ENCODE measurements at regions of chr10 and their contacts with region 1.

Region 1: GRCh38 chr10:73848821-73849489 is 25.4 kb downstream of the CAMK2G start:
- DNase-seq: peak; percentile 86
- ATAC-seq: peak; percentile 83 to 85

Region 2: GRCh38 chr10:73772280-73773151 is 76.4 kb before region 1 on chr10:
- intact Hi-C with region 1: no loop called
- DNase-seq: peak; percentile 86
- ATAC-seq: peak; percentile 88 to 90

Region 3: DNA sequence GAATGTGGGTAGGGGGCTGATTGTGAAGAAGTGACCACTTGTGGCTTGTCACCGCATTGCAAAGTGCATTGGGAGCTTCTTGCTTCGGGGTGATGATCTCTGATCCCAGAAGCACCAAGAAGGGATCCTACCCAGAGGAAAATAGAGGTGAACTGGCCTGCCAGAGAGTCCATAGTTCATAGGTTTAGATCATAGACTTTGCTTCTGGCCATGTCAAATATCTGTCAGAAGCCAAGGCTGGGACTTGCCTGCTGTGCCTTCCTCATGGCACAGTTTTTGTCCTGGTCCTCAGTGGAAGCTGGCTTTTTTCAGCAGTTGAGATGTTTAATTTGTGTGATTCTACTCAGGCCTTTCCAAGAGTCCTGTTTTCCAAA is 62.5 kb before region 1 on chr10:
- intact Hi-C with region 1: no loop called
- DNase-seq: no peak
- ATAC-seq: no peak

Region 4: GRCh38 chr10:73879296-73880173 is 30.6 kb after region 1 on chr10:
- intact Hi-C with region 1: loop called (anchors 1 to 2 kb)
- DNase-seq: peak; percentile 91
- ATAC-seq: peak; percentile 93 to 96

Region 5: DNA sequence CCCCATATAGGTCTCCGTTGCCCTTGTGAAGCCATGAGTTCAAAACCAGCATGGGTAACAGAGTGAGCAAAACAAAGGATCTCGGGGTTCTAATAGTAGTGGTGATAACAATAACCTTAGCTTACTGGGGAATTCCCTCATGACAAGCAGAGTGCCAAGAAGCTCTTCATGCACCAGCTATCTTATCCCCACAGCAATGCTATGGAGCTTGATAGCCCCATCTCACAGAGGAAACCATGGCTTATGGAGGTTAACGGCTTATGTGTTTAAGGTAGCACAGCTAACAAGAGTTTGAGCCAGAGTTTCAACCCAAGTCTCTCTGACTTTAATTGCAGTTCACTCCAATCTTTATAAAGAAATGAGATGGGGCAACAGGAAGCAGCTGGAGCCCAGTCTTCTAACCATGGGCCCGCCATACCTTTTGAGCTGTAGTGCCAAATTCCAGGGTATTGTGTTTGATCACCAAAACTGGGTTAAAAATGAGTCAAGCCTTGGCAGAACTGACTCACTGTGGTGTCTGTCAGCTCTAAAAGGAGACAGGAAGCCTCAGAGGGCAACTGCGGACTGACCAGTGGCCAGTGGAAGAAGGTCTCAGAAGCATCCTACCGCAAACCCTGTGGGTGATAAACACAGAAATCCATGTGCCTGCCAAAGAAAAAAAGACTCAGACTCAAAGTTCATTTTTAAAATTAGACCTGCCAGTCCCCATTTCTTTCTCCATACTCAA is 45.5 kb after region 1 on chr10:
- intact Hi-C with region 1: no loop called
- DNase-seq: no peak
- ATAC-seq: no peak

Region 6: DNA sequence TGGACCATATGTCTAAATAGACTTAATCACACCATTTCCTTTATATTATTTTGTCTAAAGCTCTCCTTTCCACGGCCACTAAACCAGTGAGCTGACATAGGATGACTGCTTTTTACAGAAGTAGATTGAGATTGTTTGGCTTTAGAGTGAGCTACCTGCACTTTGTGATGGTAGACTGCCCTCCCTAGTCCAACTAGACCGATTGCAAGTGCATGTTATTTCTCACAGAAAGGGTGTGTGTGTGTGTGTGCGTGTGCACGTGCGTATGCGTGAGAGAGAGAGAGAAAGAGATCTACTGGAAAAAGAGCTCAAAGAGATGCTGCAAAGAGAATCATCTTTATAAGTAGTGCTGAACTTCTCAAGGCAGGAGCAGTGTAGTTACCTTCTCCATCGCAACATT is 209.7 kb after region 1 on chr10:
- intact Hi-C with region 1: no loop called
- DNase-seq: no peak
- ATAC-seq: peak in 1 of 2 donors; percentile 59

Measured in left cardiac atrium (tissue), 4 donors.